ENCODE measurements at regions of chr1 and their contacts with region 1.

Region 1: DNA sequence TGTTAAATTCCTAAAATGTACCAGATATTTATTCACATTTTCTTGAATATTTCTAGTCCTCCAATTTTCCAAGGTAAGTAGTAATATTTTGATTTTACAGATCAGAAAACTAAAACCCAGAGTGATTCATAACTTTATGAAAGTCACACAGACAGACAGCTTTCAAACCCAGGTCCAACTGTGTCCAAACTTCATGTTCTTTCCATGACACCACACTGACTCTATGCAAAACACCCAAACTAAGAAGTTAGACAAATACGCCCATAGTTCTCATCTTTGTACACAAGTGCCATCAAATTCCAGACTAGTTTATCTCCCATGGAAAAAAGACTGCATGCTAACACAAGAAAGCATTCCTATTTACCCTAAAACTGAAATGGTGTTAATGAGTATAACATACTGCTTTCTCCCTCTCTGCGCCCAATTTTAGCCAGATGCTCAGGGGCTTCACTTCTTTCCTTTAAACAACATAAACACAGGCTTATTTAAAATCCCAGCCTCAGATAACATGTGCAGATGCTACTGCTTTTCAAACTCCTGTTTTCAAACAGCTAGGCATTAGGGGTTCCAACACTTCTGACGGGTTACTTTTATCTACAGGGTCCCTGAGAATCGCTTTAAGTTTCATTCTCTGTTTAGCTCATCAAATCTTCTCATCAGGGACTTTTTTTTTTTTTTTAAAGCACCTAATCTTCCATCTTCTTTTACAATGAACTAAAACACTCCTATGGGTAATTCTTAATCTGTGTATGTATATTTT is 44.6 kb downstream of the WASF2 start:
- DNase-seq: no peak
- H3K4me3 ChIP-seq: no peak overlapping the region
- H3K27ac ChIP-seq: no peak overlapping the region
- H3K27me3 ChIP-seq: no peaks in the 10 kb centered on the region
- CTCF ChIP-seq: no peak

Region 2: DNA sequence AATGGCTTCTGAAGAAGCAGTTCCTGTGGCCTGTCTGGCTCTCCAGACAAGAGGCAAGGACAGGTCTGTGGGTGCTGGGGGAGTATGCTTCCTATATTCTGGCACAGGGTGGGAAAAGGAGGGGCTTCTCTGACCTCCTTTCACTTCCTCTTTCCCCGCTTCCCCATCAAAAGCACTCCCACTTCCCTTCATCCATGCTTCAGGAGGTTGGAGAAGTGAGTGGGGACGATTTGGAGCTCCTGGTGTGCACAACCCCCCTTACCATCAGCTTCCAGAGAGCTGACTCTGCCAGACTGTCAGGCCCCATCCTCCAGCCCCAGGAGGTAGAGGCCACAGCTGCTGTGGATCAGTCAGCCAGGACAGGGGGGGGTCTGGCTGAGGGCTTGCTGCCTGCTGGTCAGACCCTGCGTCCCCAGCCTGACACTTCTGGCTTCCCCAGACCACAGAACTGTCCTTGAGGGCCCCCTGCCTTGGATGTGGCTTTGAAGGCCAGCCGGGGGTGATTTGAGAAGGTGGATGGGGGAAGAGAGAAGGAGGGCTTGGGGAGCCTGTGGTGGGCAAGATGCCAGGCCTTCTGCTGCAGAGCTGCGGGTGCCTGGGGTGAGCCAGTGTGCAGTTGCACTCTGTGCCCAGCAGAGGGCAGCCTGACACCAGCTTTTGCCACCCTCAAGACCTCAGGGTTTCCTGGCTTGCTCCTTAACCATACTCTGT is 144.9 kb before region 1 on chr1:
- CTCF ChIA-PET with region 1: no interaction called
- POLR2A ChIA-PET with region 1: no interaction called
- DNase-seq: peak; percentile 93
- H3K4me3 ChIP-seq: peak overlapping the region; percentile 29; the same call in 1 of the 2 replicates
- H3K27ac ChIP-seq: peak overlapping the region; percentile 97
- H3K27me3 ChIP-seq: no peaks in the 10 kb centered on the region
- CTCF ChIP-seq: peak; percentile 96

Region 3: DNA sequence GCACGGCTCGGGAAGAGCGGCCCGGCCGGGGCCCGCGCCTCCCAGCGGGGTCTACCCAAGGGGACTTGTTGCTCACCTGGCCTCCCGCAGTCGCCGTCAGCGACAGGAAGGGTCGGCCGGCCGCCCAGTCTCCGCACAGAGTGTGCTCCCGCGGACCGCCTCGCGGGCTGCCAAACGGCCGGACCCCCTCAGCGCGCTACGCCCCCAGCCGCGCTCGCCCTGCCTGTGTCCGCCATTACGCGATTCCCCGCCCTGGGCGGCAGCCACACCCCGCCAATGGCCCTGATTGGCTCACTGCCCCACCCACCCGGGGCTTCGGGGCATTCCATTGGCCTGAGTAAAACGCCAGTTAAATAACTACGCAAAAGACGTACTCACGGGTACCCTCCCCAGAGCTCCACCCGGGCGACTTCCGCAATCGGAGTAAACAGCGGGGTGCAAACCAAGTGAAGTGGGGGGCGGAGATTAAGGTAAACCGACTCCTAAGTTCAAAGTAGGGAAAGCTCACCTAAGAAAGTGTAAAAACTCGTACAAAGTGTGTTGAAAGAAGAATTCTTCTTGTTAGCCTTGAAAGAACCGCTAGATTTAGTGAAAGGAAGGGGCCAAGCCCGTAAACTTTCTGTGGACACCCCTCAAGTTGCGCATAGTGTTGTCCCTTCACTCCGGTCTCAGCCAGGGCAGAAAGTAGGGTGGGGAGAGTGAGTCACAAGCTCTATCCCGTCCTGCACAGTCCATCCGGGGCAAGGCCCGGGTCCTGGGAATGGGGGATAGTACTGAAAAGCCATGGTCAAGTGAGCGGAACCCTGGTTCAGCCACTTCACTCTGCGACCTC is 44.8 kb after region 1 on chr1 and contains the start of gene WASF2:
- CTCF ChIA-PET with region 1: no interaction called
- POLR2A ChIA-PET with region 1: no interaction called
- DNase-seq: peak; percentile 92
- H3K4me3 ChIP-seq: peak within 1 kb of the TSS; percentile 75
- H3K27ac ChIP-seq: peak within 1 kb of the TSS; percentile 90
- H3K27me3 ChIP-seq: no peaks in the 10 kb centered on the region
- CTCF ChIP-seq: no peak
- polyA plus RNA-seq, gene WASF2: 54.8 and 62.7 TPM in 2 replicates

Region 4: GRCh38 chr1:27643701-27644625 is 198.6 kb after region 1 on chr1:
- CTCF ChIA-PET with region 1: no interaction called
- POLR2A ChIA-PET with region 1: interaction called, 13 read pairs
- DNase-seq: no peak
- H3K4me3 ChIP-seq: no peak overlapping the region
- H3K27ac ChIP-seq: no peak overlapping the region
- H3K27me3 ChIP-seq: peaks cover 11% of the 10 kb centered on the region
- CTCF ChIP-seq: peak; percentile 90

Measured in AG04450 (cell line).